Psoas muscle (tissue), 8 donors: ENCODE measurements at regions of chr6 and their contacts with region 1.

Region 1: GRCh38 chr6:75208298-75209183 is 2.7 kb upstream of the COL12A1 start:
- DNase-seq: peak; percentile 81 to 88
- ATAC-seq: peak; percentile 70 to 81 (median 75)
- H3K4me3 ChIP-seq: peak overlapping the region; percentile 47
- H3K27ac ChIP-seq: no peak overlapping the region
- H3K4me1 ChIP-seq: peaks cover 25% of the 10 kb centered on the region
- H3K27me3 ChIP-seq: peaks cover 0 to 48% (median 12%) of the 10 kb centered on the region in 3 donors
- CTCF ChIP-seq: peak; percentile 88

Region 2: DNA sequence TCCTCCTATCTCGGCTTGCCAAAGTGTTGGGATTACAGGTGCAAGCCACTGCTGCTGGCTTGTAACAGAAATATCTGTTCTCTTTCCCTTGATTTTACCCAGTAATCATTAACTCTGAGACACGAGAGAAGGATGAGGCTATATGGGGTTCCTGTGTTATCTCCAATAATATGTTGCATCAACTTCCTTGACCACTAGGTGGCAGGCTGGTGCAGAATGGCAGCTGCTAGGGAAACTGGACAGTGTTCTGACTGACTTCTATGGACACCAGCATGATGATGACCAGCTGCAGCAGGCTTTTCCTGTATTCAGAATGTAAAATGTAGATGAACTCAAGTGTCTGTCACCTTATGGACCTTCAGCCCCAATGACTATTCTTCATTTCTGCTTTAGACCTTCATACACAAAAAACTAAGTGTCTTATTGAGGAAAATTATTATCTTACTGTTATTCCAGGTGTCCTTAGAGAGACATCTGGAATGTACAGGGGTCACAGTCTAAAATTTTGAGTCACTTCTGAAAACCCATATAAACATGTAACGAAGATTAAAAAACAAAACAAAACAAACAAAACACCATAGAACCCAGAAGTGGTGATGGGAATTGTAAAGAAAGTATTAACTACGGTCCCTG is 1533.0 kb before region 1 on chr6:
- intact Hi-C with region 1: loop called (anchors 10 kb)
- DNase-seq: peak; percentile 57 to 71
- ATAC-seq: peak; percentile 67 to 86 (median 80)
- H3K4me3 ChIP-seq: no peak overlapping the region
- H3K27ac ChIP-seq: no peak overlapping the region
- H3K4me1 ChIP-seq: no peaks in the 10 kb centered on the region
- H3K27me3 ChIP-seq: no peaks in the 10 kb centered on the region
- CTCF ChIP-seq: peak; percentile 92

Region 3: DNA sequence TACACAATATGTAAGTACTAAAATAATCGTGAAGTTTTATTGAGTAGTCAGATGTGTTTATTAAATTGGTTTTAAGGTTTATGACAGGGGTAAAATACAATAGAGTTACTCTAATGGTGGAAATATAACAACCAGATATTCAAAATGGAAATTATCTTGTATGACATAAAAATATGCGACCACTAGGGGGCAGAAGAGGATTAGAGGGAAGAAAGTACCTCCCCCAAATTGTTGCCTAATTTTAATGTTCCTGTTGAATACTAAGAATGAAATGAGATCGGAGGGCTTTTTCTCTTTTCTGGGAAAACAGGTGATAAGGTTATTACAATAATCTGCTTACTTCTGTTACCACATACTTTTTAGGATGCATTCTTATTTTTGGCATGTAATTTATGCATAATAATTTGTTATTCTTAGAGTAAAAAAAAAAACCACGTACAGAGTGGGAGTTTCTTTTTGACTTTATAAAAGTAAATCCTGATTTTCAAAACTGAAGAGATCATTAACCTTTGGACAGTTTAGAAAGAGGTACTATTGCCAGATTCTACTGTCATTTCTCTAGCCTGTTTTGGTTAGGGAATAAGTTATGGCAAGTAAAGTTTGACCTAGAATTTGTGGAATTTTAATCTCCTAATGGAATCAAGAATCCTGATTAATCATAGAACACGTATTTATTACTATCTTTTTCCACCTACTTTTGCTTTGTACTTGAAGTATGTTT is 1353.4 kb before region 1 on chr6:
- intact Hi-C with region 1: loop called (anchors 5 to 10 kb)
- DNase-seq: no peak
- ATAC-seq: peak in 1 of 4 donors; percentile 41
- H3K4me3 ChIP-seq: peak overlapping the region; percentile 31
- H3K27ac ChIP-seq: no peak overlapping the region
- H3K4me1 ChIP-seq: no peaks in the 10 kb centered on the region
- H3K27me3 ChIP-seq: no peaks in the 10 kb centered on the region
- CTCF ChIP-seq: peak; percentile 62

Region 4: GRCh38 chr6:74091136-74091793 is 1117.3 kb before region 1 on chr6:
- intact Hi-C with region 1: loop called in 1 of 2 experiments (anchors 2 kb)
- DNase-seq: no peak
- ATAC-seq: no peak
- H3K4me3 ChIP-seq: no peak overlapping the region
- H3K27ac ChIP-seq: no peak overlapping the region
- H3K4me1 ChIP-seq: no peaks in the 10 kb centered on the region
- H3K27me3 ChIP-seq: peaks cover 0 to 2% (median 0%) of the 10 kb centered on the region in 3 donors
- CTCF ChIP-seq: peak; percentile 63

Region 5: GRCh38 chr6:74749211-74750142 is 459.1 kb before region 1 on chr6:
- intact Hi-C with region 1: loop called in 1 of 2 experiments (anchors 10 kb)
- DNase-seq: no peak
- ATAC-seq: no peak
- H3K4me3 ChIP-seq: no peak overlapping the region
- H3K27ac ChIP-seq: no peak overlapping the region
- H3K4me1 ChIP-seq: no peaks in the 10 kb centered on the region
- H3K27me3 ChIP-seq: no peaks in the 10 kb centered on the region
- CTCF ChIP-seq: no peak

Region 6: GRCh38 chr6:74834967-74835366 is 373.6 kb before region 1 on chr6:
- intact Hi-C with region 1: no loop called
- DNase-seq: no peak
- ATAC-seq: no peak
- H3K4me3 ChIP-seq: no peak overlapping the region
- H3K27ac ChIP-seq: no peak overlapping the region
- H3K4me1 ChIP-seq: no peaks in the 10 kb centered on the region
- H3K27me3 ChIP-seq: no peaks in the 10 kb centered on the region
- CTCF ChIP-seq: no peak